Lower leg skin (tissue), 4 donors: ENCODE measurements at regions of chr15 and their contacts with region 1.

Region 1: GRCh38 chr15:98658831-98659699 is 10.7 kb downstream of the IGF1R start:
- DNase-seq: peak in 1 of 2 donors; percentile 55
- H3K4me3 ChIP-seq: no peak overlapping the region
- CTCF ChIP-seq: no peak
- POLR2A ChIP-seq: no peak

Region 2: GRCh38 chr15:98779463-98780071 is 120.5 kb after region 1 on chr15:
- intact Hi-C with region 1: loop called (anchors 10 kb)
- DNase-seq: peak; percentile 76 to 94
- H3K4me3 ChIP-seq: no peak overlapping the region
- CTCF ChIP-seq: peak in 1 of 3 donors; percentile 50
- POLR2A ChIP-seq: no peak